Activated CD4-positive, alpha-beta T cell treated with anti-CD3 and anti-CD28 coated beads, Interleukin-2, amount 10 ng/mL, durations not matched to agents 24 days and 14 days (primary cell): ENCODE measurements at regions of chr9 and their contacts with region 1.

Region 1: DNA sequence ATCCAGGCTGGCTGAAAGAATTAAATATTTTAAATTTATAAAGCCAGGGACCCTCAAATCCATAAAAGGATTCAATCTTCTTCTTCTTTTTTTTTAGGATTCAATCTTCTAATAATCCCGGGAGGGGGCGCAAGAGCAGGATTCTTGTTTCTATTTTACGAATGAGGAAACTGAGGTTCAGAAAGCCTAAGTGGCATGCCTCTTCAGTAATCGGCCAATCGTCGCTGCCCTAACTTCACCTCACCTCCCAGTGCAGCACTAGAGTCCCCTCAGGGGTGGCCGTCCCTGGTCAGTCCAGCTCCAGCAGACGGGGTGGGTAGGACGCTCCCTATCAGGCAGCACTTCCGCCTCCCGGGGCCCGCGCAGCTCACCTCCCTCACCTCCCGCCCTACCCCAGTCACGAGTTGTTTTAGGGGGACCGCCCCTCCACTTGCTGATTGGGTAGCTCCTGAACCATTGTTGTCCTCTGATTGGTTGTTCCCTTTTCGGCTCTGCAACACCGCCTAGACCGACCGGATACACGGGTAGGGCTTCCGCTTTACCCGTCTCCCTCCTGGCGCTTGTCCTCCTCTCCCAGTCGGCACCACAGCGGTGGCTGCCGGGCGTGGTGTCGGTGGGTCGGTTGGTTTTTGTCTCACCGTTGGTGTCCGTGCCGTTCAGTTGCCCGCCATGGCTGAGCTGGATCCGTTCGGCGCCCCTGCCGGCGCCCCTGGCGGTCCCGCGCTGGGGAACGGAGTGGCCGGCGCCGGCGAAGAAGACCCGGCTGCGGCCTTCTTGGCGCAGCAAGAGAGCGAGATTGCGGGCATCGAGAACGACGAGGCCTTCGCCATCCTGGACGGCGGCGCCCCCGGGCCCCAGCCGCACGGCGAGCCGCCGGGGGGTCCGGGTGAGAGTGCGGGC is at the start of gene CLTA:
- DNase-seq: peak; percentile 98
- H3K4me3 Mint-ChIP-seq: peak within 1 kb of the TSS; percentile 96
- H3K27ac Mint-ChIP-seq: peak within 1 kb of the TSS; percentile 85
- H3K4me1 Mint-ChIP-seq: peaks cover 44% of the 10 kb centered on the region
- H3K27me3 Mint-ChIP-seq: peaks cover 5% of the 10 kb centered on the region
- total RNA-seq, gene CLTA: 173 and 177 TPM in 2 replicates

Region 2: GRCh38 chr9:36036780-36037548 is 153.7 kb before region 1 on chr9 and contains the start of gene RECK:
- intact Hi-C with region 1: loop called (anchors 1 kb)
- DNase-seq: peak; percentile 97
- H3K4me3 Mint-ChIP-seq: peak within 1 kb of the TSS; percentile 97
- H3K27ac Mint-ChIP-seq: peak within 1 kb of the TSS; percentile 89
- H3K4me1 Mint-ChIP-seq: peaks cover 31% of the 10 kb centered on the region
- H3K27me3 Mint-ChIP-seq: peaks cover 15% of the 10 kb centered on the region
- total RNA-seq, gene RECK: 3.9 and 4.3 TPM in 2 replicates

Region 3: DNA sequence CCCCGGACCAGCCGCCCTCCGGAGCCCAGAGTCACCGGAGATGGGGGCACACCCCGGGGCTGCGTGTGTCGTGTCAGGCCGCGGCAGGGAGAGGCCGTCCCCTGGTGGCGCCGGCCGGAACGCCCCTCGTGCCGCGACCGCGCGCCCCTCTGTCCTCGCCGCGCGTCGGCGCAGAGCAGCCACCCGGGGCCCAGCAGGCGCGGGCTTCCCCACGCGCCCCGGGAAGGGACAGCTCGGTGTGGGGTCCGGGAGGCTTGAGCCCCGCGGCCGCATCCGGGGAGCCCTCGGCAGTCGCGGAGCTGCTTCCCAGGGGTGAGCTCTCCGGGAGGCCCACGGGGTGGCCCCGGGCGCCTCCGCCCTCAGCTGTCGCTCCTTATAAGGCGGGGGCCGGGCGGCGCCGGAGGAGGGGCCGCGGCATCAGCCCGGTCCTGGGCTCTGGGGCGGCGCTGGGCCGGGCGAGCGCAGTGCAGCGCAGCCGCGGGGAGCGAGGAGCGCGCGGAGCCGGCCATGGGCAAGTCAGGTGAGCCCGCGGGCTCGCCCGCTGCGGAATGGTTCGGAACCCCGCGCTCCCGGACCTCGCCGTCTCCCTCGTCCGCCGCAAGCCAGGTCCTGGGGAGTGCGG is 54.3 kb before region 1 on chr9 and contains the start of gene GLIPR2:
- intact Hi-C with region 1: loop called (anchors 1 kb)
- DNase-seq: peak; percentile 95
- H3K4me3 Mint-ChIP-seq: peak within 1 kb of the TSS; percentile 88
- H3K27ac Mint-ChIP-seq: peak within 1 kb of the TSS; percentile 77
- H3K4me1 Mint-ChIP-seq: peaks cover 46% of the 10 kb centered on the region
- H3K27me3 Mint-ChIP-seq: peaks cover 19% of the 10 kb centered on the region
- total RNA-seq, gene GLIPR2: 25.5 and 25.7 TPM in 2 replicates

Region 4: GRCh38 chr9:36207016-36207415 is 16.4 kb after region 1 on chr9:
- intact Hi-C with region 1: loop called (anchors 2 kb)
- DNase-seq: no peak
- H3K4me3 Mint-ChIP-seq: peak overlapping the region; percentile 43
- H3K27ac Mint-ChIP-seq: peak overlapping the region; percentile 74
- H3K4me1 Mint-ChIP-seq: peaks cover 43% of the 10 kb centered on the region
- H3K27me3 Mint-ChIP-seq: no peaks in the 10 kb centered on the region

Region 5: GRCh38 chr9:36237230-36237629 is 46.6 kb after region 1 on chr9:
- intact Hi-C with region 1: no loop called
- DNase-seq: no peak
- H3K4me3 Mint-ChIP-seq: no peak overlapping the region
- H3K27ac Mint-ChIP-seq: no peak overlapping the region
- H3K4me1 Mint-ChIP-seq: peaks cover 2% of the 10 kb centered on the region
- H3K27me3 Mint-ChIP-seq: no peaks in the 10 kb centered on the region

Region 6: DNA sequence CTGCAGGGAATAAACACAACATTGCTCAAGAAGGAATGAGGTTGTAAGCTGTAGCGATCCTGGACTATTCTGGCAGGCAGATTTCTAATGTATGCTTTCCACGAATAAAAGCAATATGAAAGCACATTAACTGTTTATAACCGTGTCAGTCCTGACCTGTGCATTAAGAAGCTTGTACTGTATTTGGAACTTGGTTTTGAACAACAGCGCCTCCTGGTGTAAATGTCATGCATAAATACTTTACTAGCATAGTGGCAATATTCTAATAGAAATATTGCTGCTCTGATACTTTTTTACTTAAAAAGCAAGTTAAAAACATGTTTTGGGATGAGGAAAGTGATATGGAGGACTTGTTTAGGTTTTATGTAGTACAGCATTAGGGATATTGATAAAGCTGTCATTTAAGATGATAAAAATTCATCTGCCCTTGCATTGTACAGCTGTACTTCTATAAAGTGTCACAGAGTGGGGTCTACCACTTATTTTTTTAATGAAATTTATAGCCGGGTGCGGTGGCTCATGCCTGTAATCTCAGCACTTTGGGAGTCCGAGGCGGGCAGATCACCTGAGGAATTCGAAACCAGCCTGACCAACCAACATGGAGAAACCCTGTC is 138.3 kb after region 1 on chr9:
- intact Hi-C with region 1: loop called (anchors 2 kb)
- DNase-seq: peak; percentile 88
- H3K4me3 Mint-ChIP-seq: no peak overlapping the region
- H3K27ac Mint-ChIP-seq: no peak overlapping the region
- H3K4me1 Mint-ChIP-seq: peaks cover 4% of the 10 kb centered on the region
- H3K27me3 Mint-ChIP-seq: no peaks in the 10 kb centered on the region